ENCODE measurements at regions of chr14 and their contacts with region 1.

Region 1: DNA sequence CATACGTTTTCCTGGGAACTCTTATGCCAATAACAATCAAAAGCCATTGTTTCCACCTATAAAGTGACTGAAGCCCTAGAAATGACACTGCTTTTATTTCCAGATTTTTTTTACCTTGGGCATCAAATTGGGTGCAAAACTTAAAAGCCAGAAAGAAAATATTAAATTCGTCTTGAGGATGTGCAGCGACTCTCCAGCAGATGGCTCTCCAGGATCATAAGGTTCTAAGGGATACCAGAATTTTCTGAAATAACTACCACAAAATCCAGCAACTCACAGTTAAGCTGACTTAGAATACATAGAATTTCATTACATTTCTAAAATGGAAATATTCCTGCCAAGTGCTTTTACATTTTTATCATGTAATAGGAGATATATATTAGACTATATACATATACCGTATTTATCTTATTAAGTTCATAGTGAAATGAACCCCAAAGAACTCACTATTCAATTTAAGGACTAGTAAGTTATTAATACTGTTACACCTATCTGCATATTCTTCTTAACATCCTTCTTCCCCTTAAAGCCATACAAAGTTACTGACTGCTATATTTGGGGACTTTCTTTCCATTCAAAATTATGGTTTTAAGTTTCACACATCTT is 44.0 kb downstream of the ARMH4 start:
- DNase-seq: peak in 1 of 2 donors; percentile 16
- ATAC-seq: peak in 1 of 2 donors; percentile 39
- H3K4me3 ChIP-seq: no peak overlapping the region
- H3K27ac ChIP-seq: no peak overlapping the region
- H3K4me1 ChIP-seq: no peaks in the 10 kb centered on the region
- H3K27me3 ChIP-seq: no peaks in the 10 kb centered on the region
- CTCF ChIP-seq: peak; percentile 47 to 82 (median 73)
- POLR2A ChIP-seq: no peak

Region 2: DNA sequence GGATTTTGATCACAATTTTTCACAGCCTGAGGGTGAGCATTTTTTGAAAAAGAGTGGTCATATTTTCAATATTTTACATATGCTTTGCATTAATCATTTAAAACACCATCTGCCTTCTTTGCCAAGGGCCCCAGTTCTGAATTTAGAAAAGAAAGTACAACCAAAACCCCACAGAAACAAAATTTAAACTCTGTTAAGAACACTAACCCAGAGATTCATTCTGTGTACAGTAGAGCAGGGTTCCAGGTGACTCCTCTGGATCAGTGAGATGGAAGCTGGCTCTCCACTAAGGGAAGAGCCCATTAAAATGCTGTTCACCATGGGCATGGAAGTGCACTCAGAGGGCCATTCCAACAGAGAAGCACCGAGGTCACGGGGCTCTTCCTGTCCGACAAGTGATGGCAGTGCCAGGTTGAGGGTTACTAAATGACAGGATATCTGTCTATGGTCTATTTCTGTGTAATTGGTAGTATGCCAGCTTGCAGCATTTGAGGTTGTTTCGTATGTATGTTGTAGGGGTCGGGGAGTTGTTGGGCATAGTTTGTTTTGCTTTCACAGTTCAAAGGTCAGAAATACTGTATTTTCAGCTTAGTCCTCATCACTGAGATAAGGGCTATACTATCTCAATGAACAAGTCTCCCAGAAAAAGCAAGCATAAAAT is 338.1 kb before region 1 on chr14:
- in situ Hi-C with region 1: no loop called
- intact Hi-C with region 1: no loop called
- DNase-seq: no peak
- ATAC-seq: no peak
- H3K4me3 ChIP-seq: no peak overlapping the region
- H3K27ac ChIP-seq: no peak overlapping the region
- H3K4me1 ChIP-seq: no peaks in the 10 kb centered on the region
- H3K27me3 ChIP-seq: no peaks in the 10 kb centered on the region
- CTCF ChIP-seq: no peak
- POLR2A ChIP-seq: no peak

Region 3: GRCh38 chr14:58160561-58160960 is 52.5 kb after region 1 on chr14:
- in situ Hi-C with region 1: loop called in 2 of 4 experiments (anchors 5 to 10 kb)
- intact Hi-C with region 1: no loop called
- DNase-seq: no peak
- ATAC-seq: no peak
- H3K4me3 ChIP-seq: no peak overlapping the region
- H3K27ac ChIP-seq: no peak overlapping the region
- H3K4me1 ChIP-seq: no peaks in the 10 kb centered on the region
- H3K27me3 ChIP-seq: no peaks in the 10 kb centered on the region
- CTCF ChIP-seq: no peak
- POLR2A ChIP-seq: no peak

Region 4: DNA sequence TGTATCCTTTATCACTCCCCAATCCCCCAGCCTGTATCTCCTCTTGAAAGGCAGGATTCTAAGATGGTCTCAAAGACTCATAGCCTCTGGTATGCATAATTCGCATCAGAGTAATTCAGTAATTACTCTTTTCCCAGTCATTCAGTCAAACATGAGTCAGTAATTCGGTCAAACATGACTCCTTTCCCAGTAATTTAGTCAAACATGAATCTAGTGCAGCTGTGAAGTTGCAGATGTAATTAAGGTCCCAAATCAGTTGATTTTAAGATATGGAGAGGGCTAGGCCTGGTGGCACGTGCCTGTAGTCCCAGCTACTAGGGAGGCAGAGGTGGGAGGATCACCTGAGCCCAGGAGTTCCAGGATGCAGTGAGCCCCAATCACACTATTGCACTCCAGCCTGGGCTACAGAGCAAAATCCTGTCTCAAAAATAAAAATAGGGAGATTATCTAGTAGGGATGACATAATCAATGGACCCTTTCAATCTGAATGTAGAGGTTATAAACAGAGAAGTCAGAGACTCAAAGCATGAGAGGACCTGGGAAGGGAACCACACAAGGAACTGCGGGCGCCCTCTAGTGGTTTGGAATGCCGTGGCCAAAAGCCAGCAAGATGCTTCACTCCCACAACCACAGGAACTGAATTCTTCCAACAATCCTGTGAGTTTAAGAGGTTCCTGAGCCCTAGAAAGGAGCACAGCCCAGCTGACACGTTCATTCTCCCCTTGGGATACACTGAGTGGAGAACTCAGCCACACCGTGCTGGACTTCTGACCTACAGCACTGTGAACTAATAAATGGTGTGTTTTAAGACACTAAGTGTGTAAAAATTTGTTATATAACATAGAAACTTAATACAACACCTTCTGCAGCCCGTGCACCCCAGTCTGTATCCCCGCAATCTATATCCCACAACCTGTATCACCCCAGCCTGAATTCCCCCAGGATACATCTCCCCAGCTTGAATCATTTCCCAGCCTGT is 58.2 kb after region 1 on chr14:
- in situ Hi-C with region 1: loop called in 2 of 4 experiments (anchors 5 to 10 kb)
- intact Hi-C with region 1: loop called (anchors 2 kb)
- DNase-seq: peak; percentile 17 to 61
- ATAC-seq: peak; percentile 45 to 46
- H3K4me3 ChIP-seq: no peak overlapping the region
- H3K27ac ChIP-seq: no peak overlapping the region
- H3K4me1 ChIP-seq: peaks cover 0 to 2% of the 10 kb centered on the region in 2 donors
- H3K27me3 ChIP-seq: no peaks in the 10 kb centered on the region
- CTCF ChIP-seq: peak; percentile 47 to 80 (median 60)
- POLR2A ChIP-seq: no peak

Region 5: DNA sequence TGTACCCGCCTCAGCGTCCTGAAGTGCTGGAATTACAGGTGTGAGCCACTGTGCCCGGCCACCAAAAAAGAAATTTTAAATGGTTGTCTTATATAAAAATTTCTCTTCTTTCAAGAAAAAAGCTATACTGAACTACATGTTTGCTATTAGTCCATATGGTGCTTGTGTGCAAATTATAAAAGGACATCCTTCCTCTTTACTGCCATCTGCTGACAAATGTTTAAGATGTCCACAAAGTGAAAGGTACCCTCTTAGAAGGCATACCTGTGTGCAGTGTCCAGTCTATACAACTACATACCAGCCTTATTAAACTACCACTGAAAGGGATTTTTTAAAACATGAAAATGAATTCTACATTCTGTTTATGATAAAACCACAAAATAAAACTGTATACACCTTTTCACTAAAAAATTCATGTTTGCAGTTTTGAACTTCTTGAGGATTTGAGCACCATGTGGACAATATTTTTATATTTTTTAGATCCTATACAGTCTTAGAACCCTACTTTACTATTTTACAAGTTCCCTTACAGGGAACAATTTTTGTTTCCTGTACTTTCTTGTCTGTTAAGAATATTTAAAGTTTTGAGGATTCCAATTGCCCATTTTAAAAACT is 254.9 kb after region 1 on chr14:
- in situ Hi-C with region 1: loop called in 2 of 4 experiments (anchors 25 kb)
- intact Hi-C with region 1: loop called (anchors 10 kb)
- DNase-seq: no peak
- ATAC-seq: no peak
- H3K4me3 ChIP-seq: no peak overlapping the region
- H3K27ac ChIP-seq: no peak overlapping the region
- H3K4me1 ChIP-seq: no peaks in the 10 kb centered on the region
- H3K27me3 ChIP-seq: no peaks in the 10 kb centered on the region
- CTCF ChIP-seq: peak in 1 of 5 experiments; percentile 27
- POLR2A ChIP-seq: no peak

Region 6: GRCh38 chr14:58395812-58396788 is 288.1 kb after region 1 on chr14 and contains the start of gene TOMM20L:
- in situ Hi-C with region 1: loop called in 2 of 4 experiments (anchors 10 to 25 kb)
- intact Hi-C with region 1: loop called (anchors 10 kb)
- DNase-seq: peak; percentile 6 to 30
- ATAC-seq: peak; percentile 84 to 88
- H3K4me3 ChIP-seq: peak within 1 kb of the TSS; percentile 52 to 68 (median 57)
- H3K27ac ChIP-seq: peak within 1 kb of the TSS; percentile 43 to 63 (median 52)
- H3K4me1 ChIP-seq: peaks cover 0 to 4% of the 10 kb centered on the region in 2 donors
- H3K27me3 ChIP-seq: no peaks in the 10 kb centered on the region
- CTCF ChIP-seq: peak; percentile 58 to 91 (median 74)
- POLR2A ChIP-seq: no peak
- total RNA-seq, gene TOMM20L: not detected

Measured in gastrocnemius medialis (tissue), 4 donors.